ENCODE measurements at regions of chr21 and their contacts with region 1.

Region 1: DNA sequence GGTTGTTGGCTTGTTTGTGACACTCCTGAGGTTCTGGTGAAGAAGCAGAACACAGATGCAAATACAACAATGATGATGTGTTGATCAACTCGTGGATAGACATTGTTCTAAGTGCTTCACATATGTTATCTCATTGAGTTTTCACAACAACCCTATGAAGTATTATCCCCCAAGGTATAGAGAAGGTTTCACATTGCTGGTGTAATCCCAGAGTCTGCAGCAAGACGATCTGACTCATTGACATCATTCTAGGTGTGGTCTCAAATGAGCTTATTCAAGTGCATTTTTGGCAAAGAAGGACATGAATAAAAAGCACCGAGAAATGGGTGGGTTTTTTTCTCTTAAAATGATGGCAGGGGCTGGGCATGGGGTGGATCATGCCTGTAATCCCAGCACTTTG is 64.1 kb upstream of the SCAF4 start:
- DNase-seq: no peak
- H3K4me3 ChIP-seq: no peak overlapping the region
- H3K27ac ChIP-seq: no peak overlapping the region
- H3K4me1 ChIP-seq: no peaks in the 10 kb centered on the region
- H3K27me3 ChIP-seq: no peaks in the 10 kb centered on the region
- CTCF ChIP-seq: no peak
- POLR2A ChIP-seq: no peak

Region 2: GRCh38 chr21:31760931-31761330 is 35.1 kb before region 1 on chr21:
- intact Hi-C with region 1: loop called (anchors 2 kb)
- DNase-seq: no peak
- H3K4me3 ChIP-seq: no peak overlapping the region
- H3K27ac ChIP-seq: no peak overlapping the region
- H3K4me1 ChIP-seq: no peaks in the 10 kb centered on the region
- H3K27me3 ChIP-seq: peaks cover 0 to 3% of the 10 kb centered on the region in 2 donors
- CTCF ChIP-seq: no peak
- POLR2A ChIP-seq: no peak